ENCODE measurements at regions of chr10 and their contacts with region 1.

Region 1: GRCh38 chr10:108275895-108276685 is 1111.6 kb upstream of the SORCS1 start:
- DNase-seq: no peak
- ATAC-seq: no peak
- H3K4me3 ChIP-seq: no peak overlapping the region
- H3K27ac ChIP-seq: no peak overlapping the region
- H3K4me1 ChIP-seq: no peaks in the 10 kb centered on the region
- H3K27me3 ChIP-seq: no peaks in the 10 kb centered on the region
- CTCF ChIP-seq: no peak
- EP300 ChIP-seq: no peak
- POLR2A ChIP-seq: no peak
- RAD21 ChIP-seq: no peak

Region 2: DNA sequence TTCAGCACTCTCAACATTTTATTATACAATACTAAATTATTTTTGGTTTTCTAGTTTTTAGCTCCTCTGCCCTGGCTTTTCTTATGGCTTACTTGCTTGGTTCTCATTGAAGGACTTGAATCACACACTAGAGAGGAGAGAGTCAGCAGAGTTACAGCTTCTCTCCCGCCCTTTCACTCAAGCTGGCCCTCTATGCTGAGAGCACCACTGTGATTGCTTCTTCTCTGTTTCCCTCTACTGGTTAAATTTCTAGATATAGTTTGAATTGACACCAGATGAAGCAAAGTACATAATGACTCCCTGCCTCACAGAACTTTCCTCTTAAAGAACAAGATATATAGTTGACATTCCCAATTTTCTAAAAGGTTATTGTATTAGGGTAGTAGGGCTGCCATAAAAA is 344.3 kb before region 1 on chr10:
- CTCF ChIA-PET with region 1: no interaction called
- POLR2A ChIA-PET with region 1: no interaction called
- in situ Hi-C with region 1: no loop called
- intact Hi-C with region 1: loop called (anchors 5 kb)
- DNase-seq: no peak
- ATAC-seq: no peak
- H3K4me3 ChIP-seq: no peak overlapping the region
- H3K27ac ChIP-seq: no peak overlapping the region
- H3K4me1 ChIP-seq: no peaks in the 10 kb centered on the region
- H3K27me3 ChIP-seq: no peaks in the 10 kb centered on the region
- CTCF ChIP-seq: no peak
- EP300 ChIP-seq: no peak
- POLR2A ChIP-seq: no peak
- RAD21 ChIP-seq: no peak

Region 3: GRCh38 chr10:108393089-108393488 is 117.0 kb after region 1 on chr10:
- CTCF ChIA-PET with region 1: no interaction called
- POLR2A ChIA-PET with region 1: no interaction called
- in situ Hi-C with region 1: no loop called
- intact Hi-C with region 1: no loop called
- DNase-seq: no peak
- ATAC-seq: no peak
- H3K4me3 ChIP-seq: no peak overlapping the region
- H3K27ac ChIP-seq: no peak overlapping the region
- H3K4me1 ChIP-seq: no peaks in the 10 kb centered on the region
- H3K27me3 ChIP-seq: no peaks in the 10 kb centered on the region
- CTCF ChIP-seq: no peak
- EP300 ChIP-seq: no peak
- POLR2A ChIP-seq: no peak
- RAD21 ChIP-seq: no peak